GM23248 (cell line): ENCODE measurements at regions of chr2 and their contacts with region 1.

Region 1: DNA sequence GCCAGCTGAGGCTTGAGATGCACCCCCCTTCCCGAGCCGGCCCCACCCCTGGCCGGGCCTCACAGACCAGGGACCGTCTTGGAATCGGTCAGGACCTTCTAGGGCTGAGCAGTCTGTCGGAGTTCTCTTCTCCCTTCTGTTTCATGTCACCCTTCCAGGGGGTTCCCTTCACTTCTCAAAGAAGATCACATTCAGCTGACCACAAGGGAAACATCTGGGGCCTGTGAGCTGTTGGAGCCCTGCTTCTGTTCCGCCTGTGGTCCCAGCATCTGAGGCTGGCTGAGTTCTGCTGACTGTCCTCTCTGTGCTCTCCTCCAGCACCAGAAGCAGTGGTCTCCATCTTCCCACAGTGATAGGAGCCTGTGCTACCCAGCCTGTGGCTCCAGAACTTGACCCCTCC is 106.5 kb downstream of the SEPTIN10 start:
- DNase-seq: no peak
- H3K4me3 ChIP-seq: no peak overlapping the region
- H3K27ac ChIP-seq: no peak overlapping the region
- H3K4me1 ChIP-seq: no peaks in the 10 kb centered on the region
- H3K27me3 ChIP-seq: no peaks in the 10 kb centered on the region

Region 2: GRCh38 chr2:108927936-108928659 is 579.1 kb before region 1 on chr2:
- in situ Hi-C with region 1: loop called (anchors 10 kb)
- DNase-seq: peak; percentile 79
- H3K4me3 ChIP-seq: no peak overlapping the region
- H3K27ac ChIP-seq: no peak overlapping the region
- H3K4me1 ChIP-seq: no peaks in the 10 kb centered on the region
- H3K27me3 ChIP-seq: peaks cover 68% of the 10 kb centered on the region

Region 3: GRCh38 chr2:109062859-109063700 is 444.1 kb before region 1 on chr2:
- in situ Hi-C with region 1: no loop called
- DNase-seq: no peak
- H3K4me3 ChIP-seq: no peak overlapping the region
- H3K27ac ChIP-seq: no peak overlapping the region
- H3K4me1 ChIP-seq: no peaks in the 10 kb centered on the region
- H3K27me3 ChIP-seq: peaks cover 67% of the 10 kb centered on the region

Region 4: GRCh38 chr2:109128048-109128465 is 379.2 kb before region 1 on chr2:
- in situ Hi-C with region 1: loop called (anchors 10 kb)
- DNase-seq: peak; percentile 93
- H3K4me3 ChIP-seq: peak overlapping the region; percentile 87
- H3K27ac ChIP-seq: peak overlapping the region; percentile 46
- H3K4me1 ChIP-seq: peaks cover 45% of the 10 kb centered on the region
- H3K27me3 ChIP-seq: peaks cover 6% of the 10 kb centered on the region

Region 5: GRCh38 chr2:109690822-109691547 is 183.8 kb after region 1 on chr2:
- in situ Hi-C with region 1: no loop called
- DNase-seq: no peak
- H3K4me3 ChIP-seq: no peak overlapping the region
- H3K27ac ChIP-seq: no peak overlapping the region
- H3K4me1 ChIP-seq: peaks cover 13% of the 10 kb centered on the region
- H3K27me3 ChIP-seq: no peaks in the 10 kb centered on the region